ENCODE measurements at regions of chr9 and their contacts with region 1.

Region 1: GRCh38 chr9:130866474-130866965 is 30.1 kb downstream of the QRFP start:
- DNase-seq: peak; percentile 94
- H3K4me3 Mint-ChIP-seq: no peak overlapping the region
- H3K27ac Mint-ChIP-seq: no peak overlapping the region
- H3K4me1 Mint-ChIP-seq: peaks cover 6% of the 10 kb centered on the region
- H3K27me3 Mint-ChIP-seq: no peaks in the 10 kb centered on the region
- CTCF ChIP-seq: peak; percentile 80

Region 2: GRCh38 chr9:130707225-130707976 is 159.1 kb before region 1 on chr9:
- CTCF ChIA-PET with region 1: interaction called, 224 read pairs
- POLR2A ChIA-PET with region 1: interaction called, 3 read pairs
- intact Hi-C with region 1: loop called (anchors 1 kb)
- DNase-seq: peak; percentile 80
- H3K4me3 Mint-ChIP-seq: no peak overlapping the region
- H3K27ac Mint-ChIP-seq: no peak overlapping the region
- H3K4me1 Mint-ChIP-seq: no peaks in the 10 kb centered on the region
- H3K27me3 Mint-ChIP-seq: no peaks in the 10 kb centered on the region
- CTCF ChIP-seq: peak; percentile 79

Region 3: GRCh38 chr9:130780865-130781504 is 85.5 kb before region 1 on chr9:
- CTCF ChIA-PET with region 1: interaction called, 235 read pairs
- POLR2A ChIA-PET with region 1: no interaction called
- intact Hi-C with region 1: no loop called
- DNase-seq: peak; percentile 96
- H3K4me3 Mint-ChIP-seq: peak overlapping the region; percentile 62
- H3K27ac Mint-ChIP-seq: peak overlapping the region; percentile 96
- H3K4me1 Mint-ChIP-seq: peaks cover 32% of the 10 kb centered on the region
- H3K27me3 Mint-ChIP-seq: no peaks in the 10 kb centered on the region
- CTCF ChIP-seq: no peak

Region 4: GRCh38 chr9:130847327-130848217 is 18.9 kb before region 1 on chr9:
- CTCF ChIA-PET with region 1: interaction called, 55 read pairs
- POLR2A ChIA-PET with region 1: interaction called, 4 read pairs
- intact Hi-C with region 1: no loop called
- DNase-seq: peak; percentile 98
- H3K4me3 Mint-ChIP-seq: peak overlapping the region; percentile 59
- H3K27ac Mint-ChIP-seq: peak overlapping the region; percentile 90
- H3K4me1 Mint-ChIP-seq: peaks cover 53% of the 10 kb centered on the region
- H3K27me3 Mint-ChIP-seq: no peaks in the 10 kb centered on the region
- CTCF ChIP-seq: no peak

Region 5: GRCh38 chr9:130997925-130998596 is 131.5 kb after region 1 on chr9:
- CTCF ChIA-PET with region 1: interaction called, 20 read pairs
- POLR2A ChIA-PET with region 1: no interaction called
- intact Hi-C with region 1: loop called (anchors 1 kb)
- DNase-seq: peak; percentile 73
- H3K4me3 Mint-ChIP-seq: no peak overlapping the region
- H3K27ac Mint-ChIP-seq: no peak overlapping the region
- H3K4me1 Mint-ChIP-seq: peaks cover 18% of the 10 kb centered on the region
- H3K27me3 Mint-ChIP-seq: peaks cover 17% of the 10 kb centered on the region
- CTCF ChIP-seq: peak; percentile 89

Measured in MCF 10A (cell line).